ENCODE measurements at regions of chr5 and their contacts with region 1.

Region 1: GRCh38 chr5:33433303-33434240 is 7.2 kb upstream of the TARS1 start:
- DNase-seq: no peak
- H3K4me3 ChIP-seq: no peak overlapping the region
- H3K27ac ChIP-seq: no peak overlapping the region
- H3K4me1 ChIP-seq: no peaks in the 10 kb centered on the region
- H3K27me3 ChIP-seq: no peaks in the 10 kb centered on the region
- CTCF ChIP-seq: no peak
- EP300 ChIP-seq: no peak
- RAD21 ChIP-seq: no peak

Region 2: GRCh38 chr5:33398501-33398900 is 35.1 kb before region 1 on chr5:
- CTCF ChIA-PET with region 1: no interaction called
- POLR2A ChIA-PET with region 1: no interaction called
- DNase-seq: no peak
- H3K4me3 ChIP-seq: no peak overlapping the region
- H3K27ac ChIP-seq: peak overlapping the region in 1 of 2 experiments; percentile 22; a peak in 1 of 4 replicates
- H3K4me1 ChIP-seq: peaks cover 3 to 11% of the 10 kb centered on the region in 2 experiments; a peak in 3 of 4 replicates
- H3K27me3 ChIP-seq: no peaks in the 10 kb centered on the region
- CTCF ChIP-seq: no peak
- EP300 ChIP-seq: no peak
- RAD21 ChIP-seq: no peak

Region 3: DNA sequence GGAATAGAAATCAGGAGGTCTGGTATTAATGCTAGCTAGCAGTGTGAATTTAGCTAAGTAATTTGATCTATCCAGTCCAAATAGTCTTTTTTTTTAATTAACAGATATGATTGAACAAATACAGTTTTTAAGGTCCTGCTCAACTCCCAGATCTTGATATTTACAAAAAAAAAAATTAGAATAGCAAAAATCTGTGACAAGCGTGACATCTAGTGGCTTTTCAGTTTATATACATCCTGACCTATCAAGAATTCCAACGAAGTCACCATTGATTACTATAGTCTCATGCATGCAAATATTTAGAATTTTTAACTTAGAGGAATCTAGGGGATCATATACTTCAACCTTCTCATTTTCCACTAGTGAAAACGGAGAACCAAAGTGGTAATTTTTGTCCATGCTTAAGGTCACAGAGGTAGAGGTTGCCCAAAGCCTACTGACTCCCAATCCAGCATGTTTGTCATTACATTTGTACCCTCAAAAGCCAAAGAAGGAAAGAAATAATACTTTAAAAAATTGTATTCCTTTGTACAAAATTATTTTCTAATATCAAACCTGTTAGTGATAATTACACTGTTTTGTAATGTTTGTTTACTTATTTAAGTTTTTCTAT is 10.4 kb before region 1 on chr5:
- CTCF ChIA-PET with region 1: interaction called, 24 read pairs
- POLR2A ChIA-PET with region 1: no interaction called
- DNase-seq: no peak
- H3K4me3 ChIP-seq: no peak overlapping the region
- H3K27ac ChIP-seq: peak overlapping the region in 1 of 2 experiments; percentile 68; a peak in 2 of 4 replicates
- H3K4me1 ChIP-seq: peaks cover 0 to 10% of the 10 kb centered on the region in 2 experiments; a peak in 2 of 4 replicates
- H3K27me3 ChIP-seq: no peaks in the 10 kb centered on the region
- CTCF ChIP-seq: peak; percentile 71
- EP300 ChIP-seq: no peak
- RAD21 ChIP-seq: peak; percentile 75

Region 4: GRCh38 chr5:33969572-33970452 is 536.2 kb after region 1 on chr5:
- CTCF ChIA-PET with region 1: interaction called, 15 read pairs
- POLR2A ChIA-PET with region 1: no interaction called
- DNase-seq: peak; percentile 32
- H3K4me3 ChIP-seq: no peak overlapping the region; a peak in 1 of 4 replicates
- H3K27ac ChIP-seq: no peak overlapping the region
- H3K4me1 ChIP-seq: peaks cover 0 to 7% of the 10 kb centered on the region in 2 experiments; a peak in 1 of 4 replicates
- H3K27me3 ChIP-seq: no peaks in the 10 kb centered on the region
- CTCF ChIP-seq: peak; percentile 68
- EP300 ChIP-seq: no peak
- RAD21 ChIP-seq: peak; percentile 66

Measured in SK-N-SH (cell line).